ENCODE measurements at regions of chr18 and their contacts with region 1.

Region 1: GRCh38 chr18:35949903-35950627 is 22.4 kb upstream of the RMP24 start:
- DNase-seq: peak; percentile 28 to 82
- ATAC-seq: peak; percentile 80 to 91 (median 90)
- H3K4me3 ChIP-seq: peak overlapping the region; percentile 36
- H3K4me3 Mint-ChIP-seq: peak overlapping the region; percentile 90
- H3K27ac ChIP-seq: no peak overlapping the region
- H3K27ac Mint-ChIP-seq: peak overlapping the region; percentile 29 to 76
- H3K4me1 ChIP-seq: peaks cover 7% of the 10 kb centered on the region
- H3K4me1 Mint-ChIP-seq: peaks cover 4 to 6% of the 10 kb centered on the region in 2 donors
- H3K27me3 ChIP-seq: peaks cover 6% of the 10 kb centered on the region
- H3K27me3 Mint-ChIP-seq: peaks cover 23 to 33% of the 10 kb centered on the region in 2 donors
- CTCF ChIP-seq: peak; percentile 96

Region 2: GRCh38 chr18:35386600-35387351 is 563.3 kb before region 1 on chr18:
- intact Hi-C with region 1: loop called (anchors 1 kb)
- DNase-seq: peak; percentile 46 to 91
- ATAC-seq: peak; percentile 95 to 99 (median 98)
- H3K4me3 ChIP-seq: no peak overlapping the region
- H3K4me3 Mint-ChIP-seq: no peak overlapping the region
- H3K27ac ChIP-seq: no peak overlapping the region
- H3K27ac Mint-ChIP-seq: no peak overlapping the region
- H3K4me1 ChIP-seq: peaks cover 4% of the 10 kb centered on the region
- H3K4me1 Mint-ChIP-seq: peaks cover 5 to 9% of the 10 kb centered on the region in 2 donors
- H3K27me3 ChIP-seq: peaks cover 2% of the 10 kb centered on the region
- H3K27me3 Mint-ChIP-seq: peaks cover 24 to 31% of the 10 kb centered on the region in 2 donors
- CTCF ChIP-seq: peak; percentile 96

Region 3: GRCh38 chr18:35407871-35408481 is 542.1 kb before region 1 on chr18:
- intact Hi-C with region 1: loop called (anchors 1 kb)
- DNase-seq: peak in 1 of 2 donors; percentile 79
- ATAC-seq: peak; percentile 79 to 88 (median 84)
- H3K4me3 ChIP-seq: no peak overlapping the region
- H3K4me3 Mint-ChIP-seq: no peak overlapping the region
- H3K27ac ChIP-seq: no peak overlapping the region
- H3K27ac Mint-ChIP-seq: no peak overlapping the region
- H3K4me1 ChIP-seq: peaks cover 17% of the 10 kb centered on the region
- H3K4me1 Mint-ChIP-seq: peaks cover 5 to 8% of the 10 kb centered on the region in 2 donors
- H3K27me3 ChIP-seq: no peaks in the 10 kb centered on the region
- H3K27me3 Mint-ChIP-seq: peaks cover 9 to 15% of the 10 kb centered on the region in 2 donors
- CTCF ChIP-seq: peak; percentile 89

Region 4: DNA sequence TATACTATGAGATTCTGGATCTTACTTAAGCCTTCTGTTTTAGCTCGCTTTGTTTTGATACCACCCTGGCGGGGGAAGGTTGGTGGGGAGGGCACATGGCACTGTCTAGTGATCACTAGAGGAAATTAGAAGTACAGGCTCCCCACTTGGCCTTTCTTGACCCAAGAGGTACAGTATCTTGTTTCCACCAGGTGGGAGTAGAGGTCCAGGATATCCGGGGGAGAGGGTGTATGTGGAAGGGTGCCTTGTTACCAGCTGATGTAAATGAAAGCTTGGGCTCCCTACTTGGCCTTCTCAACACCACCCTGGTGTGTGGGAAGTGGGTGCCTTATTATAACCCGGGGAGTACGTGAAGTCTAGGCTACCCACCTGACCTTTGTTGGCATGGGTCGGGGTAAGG is 361.1 kb before region 1 on chr18:
- intact Hi-C with region 1: loop called (anchors 5 kb)
- DNase-seq: peak in 1 of 2 donors; percentile 63
- ATAC-seq: peak; percentile 65 to 78 (median 66)
- H3K4me3 ChIP-seq: no peak overlapping the region
- H3K4me3 Mint-ChIP-seq: no peak overlapping the region
- H3K27ac ChIP-seq: no peak overlapping the region
- H3K27ac Mint-ChIP-seq: peak overlapping the region; percentile 23 to 50
- H3K4me1 ChIP-seq: peaks cover 5% of the 10 kb centered on the region
- H3K4me1 Mint-ChIP-seq: peaks cover 31 to 32% of the 10 kb centered on the region in 2 donors
- H3K27me3 ChIP-seq: no peaks in the 10 kb centered on the region
- H3K27me3 Mint-ChIP-seq: no peaks in the 10 kb centered on the region
- CTCF ChIP-seq: no peak

Region 5: GRCh38 chr18:35756506-35757117 is 193.5 kb before region 1 on chr18:
- intact Hi-C with region 1: loop called (anchors 1 kb)
- DNase-seq: peak in 1 of 2 donors; percentile 71
- ATAC-seq: peak; percentile 61 to 78 (median 69)
- H3K4me3 ChIP-seq: no peak overlapping the region
- H3K4me3 Mint-ChIP-seq: no peak overlapping the region
- H3K27ac ChIP-seq: no peak overlapping the region
- H3K27ac Mint-ChIP-seq: no peak overlapping the region
- H3K4me1 ChIP-seq: no peaks in the 10 kb centered on the region
- H3K4me1 Mint-ChIP-seq: no peaks in the 10 kb centered on the region
- H3K27me3 ChIP-seq: no peaks in the 10 kb centered on the region
- H3K27me3 Mint-ChIP-seq: peaks cover 20 to 32% of the 10 kb centered on the region in 2 donors
- CTCF ChIP-seq: peak; percentile 92

Region 6: DNA sequence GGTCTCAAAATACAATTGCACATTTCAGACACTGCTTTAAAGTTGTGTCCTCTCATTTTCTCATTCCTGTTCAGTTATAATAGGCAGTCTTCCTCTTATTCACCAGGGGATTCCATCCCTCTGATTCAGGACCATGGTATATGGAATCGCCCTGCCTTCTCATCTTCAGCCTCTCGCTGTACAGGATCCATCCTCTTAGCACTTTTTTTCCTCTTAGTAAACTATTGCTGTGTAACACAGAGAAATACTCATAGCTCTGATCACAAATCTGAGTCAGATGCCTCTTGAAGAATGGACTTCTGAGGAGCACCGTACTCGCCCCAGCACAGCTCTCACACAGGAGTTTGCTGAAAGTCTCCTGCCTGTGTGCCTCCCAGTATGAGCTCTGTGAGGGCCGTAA is 33.8 kb after region 1 on chr18:
- intact Hi-C with region 1: no loop called
- DNase-seq: no peak
- ATAC-seq: no peak
- H3K4me3 ChIP-seq: no peak overlapping the region
- H3K4me3 Mint-ChIP-seq: no peak overlapping the region
- H3K27ac ChIP-seq: no peak overlapping the region
- H3K27ac Mint-ChIP-seq: no peak overlapping the region
- H3K4me1 ChIP-seq: no peaks in the 10 kb centered on the region
- H3K4me1 Mint-ChIP-seq: no peaks in the 10 kb centered on the region
- H3K27me3 ChIP-seq: no peaks in the 10 kb centered on the region
- H3K27me3 Mint-ChIP-seq: no peaks in the 10 kb centered on the region
- CTCF ChIP-seq: no peak

Measured in natural killer cell (primary cell).